ENCODE measurements at regions of chr22 and their contacts with region 1.

Region 1: GRCh38 chr22:34354071-34354817 is 434.0 kb upstream of the LARGE1 start:
- DNase-seq: no peak
- H3K4me3 ChIP-seq: no peak overlapping the region
- CTCF ChIP-seq: no peak
- POLR2A ChIP-seq: no peak

Region 2: GRCh38 chr22:33271390-33272161 is 1082.7 kb before region 1 on chr22:
- intact Hi-C with region 1: loop called (anchors 5 kb)
- DNase-seq: no peak
- H3K4me3 ChIP-seq: no peak overlapping the region
- CTCF ChIP-seq: no peak
- POLR2A ChIP-seq: no peak

Region 3: GRCh38 chr22:34255042-34255441 is 99.2 kb before region 1 on chr22:
- intact Hi-C with region 1: no loop called
- DNase-seq: no peak
- H3K4me3 ChIP-seq: no peak overlapping the region
- CTCF ChIP-seq: no peak
- POLR2A ChIP-seq: no peak

Region 4: DNA sequence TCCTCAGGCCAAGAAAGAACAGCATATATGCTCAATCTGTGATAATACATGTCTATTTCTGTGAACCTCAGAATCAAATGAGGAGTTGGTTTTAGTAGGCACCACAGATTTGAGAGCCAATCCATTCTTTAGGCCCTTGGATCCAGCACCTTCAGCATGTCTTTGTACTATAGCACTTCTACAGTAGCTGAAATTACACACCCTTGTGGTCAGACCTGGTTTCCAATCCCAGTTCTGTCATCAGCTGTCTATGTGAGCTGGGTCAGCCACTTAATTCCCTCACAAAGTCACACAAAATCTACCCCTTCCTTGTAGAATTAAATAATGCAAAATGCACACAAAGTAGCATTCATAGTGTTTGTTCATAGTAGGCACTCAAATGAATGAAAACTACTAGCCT is 52.7 kb before region 1 on chr22:
- intact Hi-C with region 1: no loop called
- DNase-seq: no peak
- H3K4me3 ChIP-seq: no peak overlapping the region
- CTCF ChIP-seq: no peak
- POLR2A ChIP-seq: no peak

Region 5: DNA sequence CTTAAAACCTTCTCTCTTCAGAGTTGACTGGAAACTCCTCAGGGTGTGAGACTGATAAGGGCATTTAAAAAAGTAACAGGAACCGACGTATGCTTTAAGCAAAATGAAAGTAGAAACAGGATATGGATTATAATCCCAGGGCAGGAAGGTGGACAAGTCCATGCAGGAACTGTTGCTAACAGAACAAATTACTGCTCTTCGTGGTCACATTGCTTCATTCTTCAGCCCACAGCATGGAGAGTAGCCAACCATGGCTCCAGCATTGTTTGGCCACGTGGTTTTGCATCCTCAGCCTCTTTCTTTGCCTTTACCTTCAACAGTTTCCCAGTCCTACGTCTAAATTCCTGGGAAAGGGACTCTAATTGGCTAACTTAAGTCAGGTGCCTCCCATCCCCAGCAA is 148.6 kb after region 1 on chr22:
- intact Hi-C with region 1: no loop called
- DNase-seq: no peak
- H3K4me3 ChIP-seq: no peak overlapping the region
- CTCF ChIP-seq: no peak
- POLR2A ChIP-seq: no peak